ENCODE measurements at regions of chr7 and their contacts with region 1.

Region 1: GRCh38 chr7:74083117-74083876 is at the start of gene LIMK1:
- DNase-seq: peak; percentile 100
- H3K4me3 ChIP-seq: peak within 1 kb of the TSS; percentile 57 to 98
- H3K27ac ChIP-seq: peak within 1 kb of the TSS; percentile 62 to 86
- H3K4me1 ChIP-seq: peaks cover 23 to 27% of the 10 kb centered on the region in 2 experiments; a peak in 3 of 4 replicates
- H3K27me3 ChIP-seq: no peaks in the 10 kb centered on the region
- CTCF ChIP-seq: no peak
- EP300 ChIP-seq: no peak
- RAD21 ChIP-seq: no peak
- polyA plus RNA-seq, gene LIMK1: 64.4 and 86.6 TPM in 2 replicates

Region 2: DNA sequence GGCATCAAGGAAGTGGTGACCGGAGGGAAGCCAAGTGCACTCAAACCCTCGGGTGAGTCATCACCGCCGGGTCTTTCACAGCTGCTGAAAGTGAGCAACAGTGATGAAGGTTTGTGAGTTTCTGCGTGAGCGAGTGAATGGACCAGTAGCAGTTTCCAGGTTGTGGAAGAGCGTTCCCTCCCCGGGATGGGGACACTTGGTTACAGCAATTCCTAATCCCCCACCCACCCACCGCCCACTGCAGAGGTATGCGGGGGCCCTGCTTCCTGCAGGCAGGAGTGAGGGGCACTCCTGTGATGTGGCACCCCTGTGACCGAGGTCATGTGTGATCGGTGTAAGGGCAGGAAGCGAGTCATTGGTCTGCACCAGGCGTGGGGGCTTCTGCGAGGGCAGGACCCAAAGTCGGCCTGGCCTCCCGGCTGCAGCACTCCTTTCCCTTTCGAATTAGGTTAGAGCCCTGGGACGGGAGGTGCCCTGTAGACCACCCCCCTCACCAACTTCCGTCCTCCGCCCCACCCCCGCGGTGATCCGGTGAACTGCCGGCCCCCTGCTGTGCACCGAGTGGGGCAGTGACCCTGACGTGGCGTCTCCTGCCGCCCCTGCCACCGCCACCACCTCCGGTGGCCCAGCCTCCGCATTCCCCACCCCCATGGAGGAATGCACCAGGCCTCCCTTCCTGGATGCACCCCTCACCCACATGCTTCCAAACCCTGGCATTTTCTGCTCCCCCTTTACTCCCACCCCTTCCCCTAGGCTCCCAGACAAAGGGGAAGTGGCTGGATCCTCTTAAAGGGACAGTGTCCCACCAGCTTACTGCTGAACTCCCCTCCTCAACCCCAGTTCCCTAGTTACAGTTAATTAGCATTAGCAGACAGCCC is 11.2 kb after region 1 on chr7:
- CTCF ChIA-PET with region 1: no interaction called
- POLR2A ChIA-PET with region 1: interaction called, 10 read pairs
- DNase-seq: peak; percentile 90
- H3K4me3 ChIP-seq: peak overlapping the region; percentile 36 to 60
- H3K27ac ChIP-seq: peak overlapping the region; percentile 95
- H3K4me1 ChIP-seq: peaks cover 41 to 50% of the 10 kb centered on the region in 2 experiments; a peak in 3 of 4 replicates
- H3K27me3 ChIP-seq: no peaks in the 10 kb centered on the region
- CTCF ChIP-seq: no peak
- EP300 ChIP-seq: peak; percentile 21 to 83; a peak in 2 of 4 replicates
- RAD21 ChIP-seq: peak; percentile 30

Region 3: DNA sequence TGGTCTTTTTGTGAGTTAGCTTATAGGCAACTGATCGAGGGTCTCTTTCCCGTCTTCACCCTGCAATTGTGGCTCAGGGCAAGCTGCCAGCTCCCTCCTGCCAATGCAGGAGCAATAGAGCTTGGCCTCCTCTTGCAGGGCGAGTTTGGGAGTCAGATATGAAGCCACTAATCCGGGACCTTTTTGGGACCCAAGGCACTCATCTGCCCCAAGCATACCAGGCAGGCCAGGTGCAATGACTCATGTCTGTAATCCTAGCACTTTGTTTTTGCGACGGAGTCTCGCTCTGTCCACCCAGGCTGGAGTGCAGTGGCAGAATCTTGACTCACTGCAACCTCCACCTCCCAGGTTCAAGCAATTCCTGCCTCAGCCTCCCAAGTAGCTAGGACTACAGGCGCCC is 21.4 kb after region 1 on chr7:
- CTCF ChIA-PET with region 1: no interaction called
- POLR2A ChIA-PET with region 1: no interaction called
- DNase-seq: no peak
- H3K4me3 ChIP-seq: no peak overlapping the region
- H3K27ac ChIP-seq: no peak overlapping the region
- H3K4me1 ChIP-seq: no peaks in the 10 kb centered on the region
- H3K27me3 ChIP-seq: no peaks in the 10 kb centered on the region
- CTCF ChIP-seq: no peak
- EP300 ChIP-seq: no peak
- RAD21 ChIP-seq: no peak

Region 4: DNA sequence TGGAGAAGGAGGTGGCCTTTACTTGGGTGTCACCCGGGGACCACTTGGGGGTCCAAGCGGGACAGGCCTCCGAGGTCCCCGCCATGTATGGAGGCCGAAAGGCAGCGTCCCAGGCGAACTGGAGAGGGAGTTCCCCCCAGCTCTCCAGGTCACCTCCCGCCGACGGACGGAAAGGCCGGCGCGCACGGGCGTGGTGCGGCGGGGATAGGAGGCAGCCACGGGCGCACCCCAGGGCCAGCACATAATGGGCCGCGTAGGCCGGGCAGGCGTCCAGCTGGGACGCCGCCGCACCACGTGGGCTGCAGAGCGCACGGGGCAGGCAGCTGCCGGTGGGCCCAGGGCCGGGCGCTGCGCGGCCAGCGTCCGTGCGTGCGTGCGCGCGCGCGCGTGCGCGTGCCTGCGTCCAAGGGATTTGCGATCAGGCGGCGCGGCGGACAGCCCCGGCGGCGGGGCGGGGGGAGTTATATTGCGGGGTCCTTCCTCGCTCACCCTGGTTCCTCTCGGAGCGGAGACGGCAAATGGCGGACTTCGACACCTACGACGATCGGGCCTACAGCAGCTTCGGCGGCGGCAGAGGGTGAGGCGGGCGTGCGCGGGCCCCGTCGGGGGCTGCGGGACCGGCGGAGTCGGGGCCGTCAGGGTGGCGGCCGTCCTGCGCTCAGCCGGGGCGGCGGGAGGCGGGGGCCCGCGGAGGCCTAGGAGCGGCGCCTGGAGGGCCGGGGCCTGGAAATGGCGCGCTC is 90.7 kb after region 1 on chr7 and contains the start of gene EIF4H:
- CTCF ChIA-PET with region 1: no interaction called
- POLR2A ChIA-PET with region 1: interaction called, 12 read pairs
- DNase-seq: peak; percentile 100
- H3K4me3 ChIP-seq: peak within 1 kb of the TSS; percentile 72 to 88
- H3K27ac ChIP-seq: peak within 1 kb of the TSS; percentile 76 to 84
- H3K4me1 ChIP-seq: peaks cover 11 to 24% of the 10 kb centered on the region in 2 experiments; a peak in 3 of 4 replicates
- H3K27me3 ChIP-seq: no peaks in the 10 kb centered on the region
- CTCF ChIP-seq: no peak
- EP300 ChIP-seq: peak in 1 of 2 experiments; percentile 38; a peak in 1 of 4 replicates
- RAD21 ChIP-seq: 0 out of 2 replicates have a peak, but pooled peaks have one; percentile 10
- polyA plus RNA-seq, gene EIF4H: 443 and 468 TPM in 2 replicates

Region 5: GRCh38 chr7:74575138-74575727 is 491.9 kb after region 1 on chr7:
- CTCF ChIA-PET with region 1: no interaction called
- POLR2A ChIA-PET with region 1: no interaction called
- DNase-seq: no peak
- H3K4me3 ChIP-seq: no peak overlapping the region
- H3K27ac ChIP-seq: no peak overlapping the region
- H3K4me1 ChIP-seq: no peaks in the 10 kb centered on the region
- H3K27me3 ChIP-seq: no peaks in the 10 kb centered on the region
- CTCF ChIP-seq: no peak
- EP300 ChIP-seq: no peak
- RAD21 ChIP-seq: no peak

Measured in SK-N-SH (cell line).